Colonic mucosa (tissue), 4 donors: ENCODE measurements at regions of chr3 and their contacts with region 1.

Region 1: DNA sequence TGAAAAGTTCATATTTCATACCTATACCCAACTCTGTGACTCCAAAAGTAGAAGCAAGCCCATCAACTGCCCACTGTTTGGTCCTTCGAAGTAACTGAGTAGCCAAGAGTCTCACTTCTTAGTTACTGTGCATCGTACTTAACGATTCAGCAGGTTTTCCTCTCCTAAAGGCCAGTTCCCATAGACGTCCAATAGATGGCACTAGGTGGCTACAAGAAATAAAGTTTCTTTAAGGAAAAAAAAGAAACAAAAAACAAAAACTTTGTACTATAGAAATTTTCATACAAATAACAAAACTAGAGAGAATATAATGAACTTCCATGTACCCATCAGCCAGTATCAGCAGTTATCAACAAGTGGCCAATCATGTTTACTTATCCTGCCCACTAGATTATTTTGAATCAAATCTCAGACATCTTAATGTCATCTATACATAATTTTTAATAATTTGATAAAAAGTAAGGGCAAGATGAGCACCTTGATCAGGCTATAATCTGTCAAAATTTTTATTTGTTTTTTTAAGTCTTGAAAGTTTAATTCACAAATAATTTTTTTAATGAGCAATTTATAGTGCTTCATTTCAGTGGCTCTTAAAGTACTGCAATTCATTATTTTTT is 63.8 kb upstream of the ACP3 start:
- DNase-seq: peak; percentile 23
- H3K4me3 ChIP-seq: no peak overlapping the region
- H3K27ac ChIP-seq: no peak overlapping the region
- H3K4me1 ChIP-seq: no peaks in the 10 kb centered on the region
- H3K27me3 ChIP-seq: no peaks in the 10 kb centered on the region
- CTCF ChIP-seq: peak; percentile 72

Region 2: DNA sequence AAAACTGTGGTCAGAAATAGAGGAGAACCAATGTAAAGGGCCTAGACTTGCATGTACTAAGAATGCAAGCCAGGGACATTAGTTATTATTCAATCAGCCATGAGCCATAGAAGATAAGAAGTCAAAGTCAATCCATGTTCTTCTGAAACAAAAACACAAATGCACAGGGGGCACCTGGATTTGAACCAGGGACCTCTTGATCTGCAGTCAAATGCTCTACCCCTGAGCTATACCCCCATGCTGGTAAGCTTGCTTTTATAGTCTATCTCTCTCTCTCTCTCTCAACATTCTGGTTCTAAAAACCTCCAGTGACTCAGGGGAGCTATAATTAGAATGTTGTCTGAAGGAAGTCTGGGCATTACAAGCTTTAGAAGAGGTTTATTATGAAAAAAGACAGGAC is 21.7 kb before region 1 on chr3:
- intact Hi-C with region 1: no loop called
- DNase-seq: no peak
- H3K4me3 ChIP-seq: no peak overlapping the region
- H3K27ac ChIP-seq: no peak overlapping the region
- H3K4me1 ChIP-seq: no peaks in the 10 kb centered on the region
- H3K27me3 ChIP-seq: no peaks in the 10 kb centered on the region
- CTCF ChIP-seq: no peak

Region 3: DNA sequence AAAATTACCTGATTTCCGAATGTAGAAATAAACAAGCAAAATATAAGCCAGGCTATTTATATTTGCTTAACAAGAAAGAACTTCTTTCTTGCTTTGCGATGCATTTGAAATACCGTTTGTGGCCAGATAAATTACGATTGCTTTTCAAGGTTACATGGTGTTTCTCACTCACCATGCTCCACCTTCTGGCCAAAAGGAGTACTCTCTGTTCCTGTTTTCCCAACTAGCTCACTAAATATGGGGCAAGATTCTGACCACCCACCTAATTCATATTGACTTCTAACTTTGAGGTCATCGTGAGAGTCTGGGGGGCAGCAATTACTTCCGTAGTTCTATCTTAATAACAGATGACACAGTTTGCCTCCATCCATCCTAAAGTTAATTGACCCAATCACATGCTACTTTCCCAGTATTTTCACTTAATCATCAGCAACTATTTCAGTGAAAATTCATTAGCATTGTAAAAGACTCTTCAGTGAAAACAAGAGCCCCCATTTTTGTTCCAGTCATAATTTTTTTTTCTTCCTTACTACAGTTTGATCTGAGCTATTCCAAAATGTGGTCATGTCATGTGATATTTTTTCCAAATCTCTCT is 89.7 kb after region 1 on chr3:
- intact Hi-C with region 1: loop called (anchors 1 kb)
- DNase-seq: peak; percentile 55
- H3K4me3 ChIP-seq: no peak overlapping the region
- H3K27ac ChIP-seq: no peak overlapping the region
- H3K4me1 ChIP-seq: no peaks in the 10 kb centered on the region
- H3K27me3 ChIP-seq: no peaks in the 10 kb centered on the region
- CTCF ChIP-seq: peak; percentile 61

Region 4: DNA sequence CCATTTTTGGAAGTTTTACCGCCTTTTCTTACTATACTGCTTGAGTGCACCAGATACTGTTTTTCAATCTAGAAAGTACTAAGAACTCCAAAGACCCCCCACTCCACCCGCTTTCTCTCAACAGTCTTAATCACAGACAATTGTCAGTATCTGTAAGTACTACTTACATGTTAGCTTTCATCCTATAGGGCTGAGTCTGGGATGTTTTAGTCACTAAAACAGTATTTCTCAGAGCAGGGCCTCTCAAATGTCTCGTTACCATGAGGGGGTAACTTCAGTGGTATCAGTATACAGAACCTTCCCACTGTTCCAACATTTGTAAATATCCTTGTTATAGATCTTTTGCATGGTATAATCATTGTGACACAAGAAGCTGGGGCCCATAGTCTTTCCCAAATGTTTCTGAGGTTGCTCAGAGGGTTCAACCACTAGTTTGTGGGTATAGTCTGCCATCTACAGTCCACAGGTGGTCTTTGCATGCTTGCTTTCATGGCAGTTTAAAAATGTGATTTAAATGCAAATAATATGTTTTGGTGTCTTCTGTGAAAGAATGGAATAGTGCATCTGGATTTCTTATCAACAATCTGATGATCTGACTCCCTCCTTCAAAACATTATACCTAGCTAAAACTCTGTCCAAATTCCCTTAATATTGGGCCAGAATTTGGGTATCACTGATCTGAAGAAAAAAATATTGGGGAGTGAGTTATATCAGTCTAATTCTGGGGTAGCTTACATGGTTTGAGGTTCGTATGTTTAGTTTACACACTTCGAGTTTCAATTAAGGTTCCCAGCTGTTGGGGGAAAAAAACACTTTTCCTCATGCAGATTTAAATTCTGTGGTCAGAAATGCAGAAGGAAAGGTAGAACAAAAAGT is 145.9 kb after region 1 on chr3:
- intact Hi-C with region 1: loop called (anchors 5 kb)
- DNase-seq: no peak
- H3K4me3 ChIP-seq: no peak overlapping the region
- H3K27ac ChIP-seq: no peak overlapping the region
- H3K4me1 ChIP-seq: no peaks in the 10 kb centered on the region
- H3K27me3 ChIP-seq: no peaks in the 10 kb centered on the region
- CTCF ChIP-seq: peak; percentile 63

Region 5: GRCh38 chr3:132659365-132660051 is 406.1 kb after region 1 on chr3 and contains the start of gene ACAD11:
- intact Hi-C with region 1: loop called (anchors 10 kb)
- DNase-seq: peak; percentile 85
- H3K4me3 ChIP-seq: peak within 1 kb of the TSS; percentile 81
- H3K27ac ChIP-seq: peak within 1 kb of the TSS; percentile 80
- H3K4me1 ChIP-seq: no peaks in the 10 kb centered on the region
- H3K27me3 ChIP-seq: no peaks in the 10 kb centered on the region
- CTCF ChIP-seq: peak; percentile 63
- total RNA-seq, gene ACAD11: 7.2 to 8.9 TPM